Esophagus muscularis mucosa (tissue), 4 donors: ENCODE measurements at regions of chr5 and their contacts with region 1.

Region 1: GRCh38 chr5:178163772-178164735 is 10.4 kb upstream of the NHP2 start:
- DNase-seq: peak; percentile 93
- H3K4me3 ChIP-seq: peak overlapping the region in 3 of 4 donors; percentile 20 to 50 (median 25)
- H3K27ac ChIP-seq: no peak overlapping the region
- H3K4me1 ChIP-seq: peaks cover 7 to 10% (median 9%) of the 10 kb centered on the region in 4 donors
- H3K27me3 ChIP-seq: peaks cover 0 to 56% (median 4%) of the 10 kb centered on the region in 4 donors
- CTCF ChIP-seq: peak; percentile 98 to 100 (median 98)
- EP300 ChIP-seq: no peak
- POLR2A ChIP-seq: no peak

Region 2: GRCh38 chr5:178075840-178076548 is 88.1 kb before region 1 on chr5:
- intact Hi-C with region 1: loop called (anchors 1 kb)
- DNase-seq: no peak
- H3K4me3 ChIP-seq: no peak overlapping the region
- H3K27ac ChIP-seq: no peak overlapping the region
- H3K4me1 ChIP-seq: peaks cover 0 to 8% (median 2%) of the 10 kb centered on the region in 4 donors
- H3K27me3 ChIP-seq: peaks cover 0 to 36% (median 6%) of the 10 kb centered on the region in 4 donors
- CTCF ChIP-seq: peak; percentile 85
- EP300 ChIP-seq: no peak
- POLR2A ChIP-seq: no peak